MCF 10A (cell line): ENCODE measurements at regions of chr15 and their contacts with region 1.

Region 1: DNA sequence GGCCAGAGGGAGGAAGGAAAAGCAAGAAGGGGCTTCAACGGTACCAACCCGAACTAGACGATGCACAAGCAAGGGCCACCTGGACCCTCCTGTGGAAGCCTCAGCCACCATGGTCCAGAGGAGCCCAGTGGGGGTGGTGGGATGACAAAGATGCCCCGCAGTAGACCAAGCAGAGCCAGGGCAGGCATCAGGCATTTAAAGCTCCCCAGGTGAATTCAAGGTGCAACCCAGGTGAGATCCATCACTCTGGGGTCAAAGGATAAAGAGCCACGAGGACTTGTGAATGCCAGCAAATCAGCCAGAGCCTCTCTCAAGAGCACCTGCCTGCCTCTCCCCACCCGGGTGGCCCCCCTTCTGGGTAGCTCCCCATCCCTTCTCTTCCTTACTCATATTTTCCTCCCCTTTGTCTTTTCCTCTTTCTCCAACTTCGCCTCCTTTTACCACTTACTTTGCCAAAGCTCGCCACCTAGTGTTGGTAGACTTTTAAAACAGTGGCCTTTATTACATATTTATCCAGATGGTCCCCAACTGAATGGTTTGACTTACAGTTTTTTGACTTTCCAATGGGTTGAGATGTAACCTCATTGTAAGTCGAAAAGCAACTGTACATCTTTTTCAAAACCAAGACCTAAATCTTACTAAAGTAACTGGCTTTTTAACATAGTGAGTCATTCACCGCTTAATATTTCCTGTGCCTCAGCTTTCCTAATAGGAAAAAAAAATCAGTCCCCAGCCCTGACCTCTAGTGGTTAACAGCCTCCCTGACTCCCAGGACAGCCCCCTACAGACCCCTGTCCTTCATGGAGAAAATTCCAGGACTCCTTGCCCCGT is 18.8 kb downstream of the PLA2G4F start:
- DNase-seq: peak; percentile 76
- H3K4me3 Mint-ChIP-seq: no peak overlapping the region
- H3K27ac Mint-ChIP-seq: no peak overlapping the region
- H3K4me1 Mint-ChIP-seq: peaks cover 5% of the 10 kb centered on the region
- H3K27me3 Mint-ChIP-seq: peaks cover 20% of the 10 kb centered on the region
- CTCF ChIP-seq: peak; percentile 66

Region 2: DNA sequence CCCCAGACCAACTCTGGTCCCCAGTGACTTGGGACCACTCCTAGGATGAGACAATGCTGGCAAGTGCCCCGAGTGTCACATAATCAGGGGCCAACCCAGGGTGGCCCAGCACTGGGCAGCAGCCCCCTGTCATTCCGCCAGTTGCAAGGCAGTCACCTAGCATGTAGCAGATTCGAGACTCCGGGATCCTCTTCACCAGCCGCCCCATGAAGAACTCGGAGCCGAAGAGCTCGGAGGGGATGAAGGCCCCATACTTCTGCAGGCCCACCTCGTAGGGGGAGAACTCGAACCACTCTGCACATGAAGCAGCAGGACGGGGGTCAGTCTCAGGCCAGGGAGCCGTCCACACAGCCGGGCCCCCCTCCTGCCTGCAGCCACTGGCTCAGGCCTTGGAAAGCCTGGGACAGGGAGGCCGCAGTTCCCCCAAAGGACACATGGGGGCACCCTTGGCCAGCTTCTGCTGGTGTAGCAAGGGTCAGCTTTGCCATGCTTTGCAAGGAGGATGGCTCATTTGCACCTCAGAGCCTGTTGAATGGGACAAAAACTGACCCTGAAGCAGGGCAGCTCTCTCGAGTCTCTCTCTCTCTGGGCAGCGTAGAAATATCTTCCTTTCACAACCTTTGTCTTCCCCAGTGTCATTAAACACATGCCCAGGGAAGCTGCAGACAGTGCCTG is 148.2 kb before region 1 on chr15:
- CTCF ChIA-PET with region 1: interaction called, 25 read pairs
- POLR2A ChIA-PET with region 1: interaction called, 3 read pairs
- intact Hi-C with region 1: loop called (anchors 1 kb)
- DNase-seq: peak; percentile 83
- H3K4me3 Mint-ChIP-seq: no peak overlapping the region
- H3K27ac Mint-ChIP-seq: no peak overlapping the region
- H3K4me1 Mint-ChIP-seq: no peaks in the 10 kb centered on the region
- H3K27me3 Mint-ChIP-seq: no peaks in the 10 kb centered on the region
- CTCF ChIP-seq: peak; percentile 98

Region 3: DNA sequence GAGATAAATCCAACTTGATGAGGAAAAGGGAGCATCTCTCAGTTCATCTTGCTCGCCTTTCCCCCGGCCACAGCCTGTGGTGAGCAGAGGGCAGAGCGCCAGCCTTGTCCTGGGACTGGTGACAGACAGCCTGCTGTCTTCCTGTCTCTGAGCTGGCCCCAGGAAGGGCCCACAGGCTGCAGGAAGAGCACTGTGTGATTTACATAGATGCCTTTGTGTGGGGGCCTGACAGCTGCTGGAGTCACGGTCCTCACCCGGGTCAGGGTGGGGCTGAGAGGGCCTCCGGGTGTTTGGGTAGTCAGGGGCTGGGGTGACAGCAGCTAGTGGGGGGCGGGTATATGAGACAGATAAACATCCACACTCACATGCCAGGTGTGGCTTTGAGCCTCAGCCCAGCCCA is 72.6 kb before region 1 on chr15:
- CTCF ChIA-PET with region 1: interaction called, 122 read pairs
- POLR2A ChIA-PET with region 1: interaction called, 5 read pairs
- intact Hi-C with region 1: loop called (anchors 1 kb)
- DNase-seq: no peak
- H3K4me3 Mint-ChIP-seq: no peak overlapping the region
- H3K27ac Mint-ChIP-seq: no peak overlapping the region
- H3K4me1 Mint-ChIP-seq: peaks cover 8% of the 10 kb centered on the region
- H3K27me3 Mint-ChIP-seq: no peaks in the 10 kb centered on the region
- CTCF ChIP-seq: no peak

Region 4: GRCh38 chr15:42084460-42085235 is 53.0 kb before region 1 on chr15:
- CTCF ChIA-PET with region 1: interaction called, 127 read pairs
- POLR2A ChIA-PET with region 1: interaction called, 13 read pairs
- intact Hi-C with region 1: loop called (anchors 1 kb)
- DNase-seq: peak; percentile 96
- H3K4me3 Mint-ChIP-seq: peak overlapping the region; percentile 65
- H3K27ac Mint-ChIP-seq: peak overlapping the region; percentile 77
- H3K4me1 Mint-ChIP-seq: peaks cover 26% of the 10 kb centered on the region
- H3K27me3 Mint-ChIP-seq: no peaks in the 10 kb centered on the region
- CTCF ChIP-seq: peak; percentile 86

Region 5: DNA sequence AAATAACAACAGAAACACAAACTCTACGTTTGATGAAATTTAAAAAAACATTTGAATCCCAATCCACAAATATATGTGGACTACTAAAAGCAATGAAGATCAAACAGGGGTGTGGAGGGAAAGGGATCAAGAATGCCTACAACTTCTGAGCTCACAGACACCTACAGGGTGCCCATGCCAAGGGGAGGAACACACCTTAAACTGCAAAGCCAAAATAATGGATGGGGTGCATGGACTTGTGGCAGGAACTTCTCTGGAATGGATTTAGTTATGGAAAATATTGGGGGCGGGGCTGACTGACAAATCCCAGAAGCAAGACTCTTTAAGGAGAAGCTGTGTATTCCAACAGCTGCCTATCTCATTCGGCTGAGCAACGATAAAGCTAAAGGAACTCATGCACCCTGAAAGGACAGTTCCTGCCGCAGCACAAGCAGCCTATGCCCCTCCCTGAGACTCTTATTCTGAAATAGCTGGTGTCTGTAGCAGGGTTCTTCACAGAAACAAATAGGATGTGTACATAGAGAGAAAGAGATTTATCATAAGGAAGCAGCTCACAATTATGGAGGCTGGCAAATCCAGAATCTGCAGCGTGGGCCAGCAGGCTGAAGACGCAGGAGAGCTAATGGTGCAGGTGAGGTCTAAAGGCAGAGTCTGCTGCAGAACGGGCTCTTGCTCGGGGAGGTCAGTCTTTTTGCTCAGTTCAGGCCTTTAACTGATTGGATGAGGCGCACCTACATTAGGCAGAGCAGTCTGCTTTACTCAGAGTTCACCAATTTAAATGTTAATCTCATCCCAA is 18.8 kb before region 1 on chr15:
- CTCF ChIA-PET with region 1: interaction called, 15 read pairs
- POLR2A ChIA-PET with region 1: interaction called, 5 read pairs
- intact Hi-C with region 1: no loop called
- DNase-seq: no peak
- H3K4me3 Mint-ChIP-seq: no peak overlapping the region
- H3K27ac Mint-ChIP-seq: no peak overlapping the region
- H3K4me1 Mint-ChIP-seq: peaks cover 18% of the 10 kb centered on the region
- H3K27me3 Mint-ChIP-seq: no peaks in the 10 kb centered on the region
- CTCF ChIP-seq: no peak